ENCODE measurements at regions of chr17 and their contacts with region 1.

Region 1: DNA sequence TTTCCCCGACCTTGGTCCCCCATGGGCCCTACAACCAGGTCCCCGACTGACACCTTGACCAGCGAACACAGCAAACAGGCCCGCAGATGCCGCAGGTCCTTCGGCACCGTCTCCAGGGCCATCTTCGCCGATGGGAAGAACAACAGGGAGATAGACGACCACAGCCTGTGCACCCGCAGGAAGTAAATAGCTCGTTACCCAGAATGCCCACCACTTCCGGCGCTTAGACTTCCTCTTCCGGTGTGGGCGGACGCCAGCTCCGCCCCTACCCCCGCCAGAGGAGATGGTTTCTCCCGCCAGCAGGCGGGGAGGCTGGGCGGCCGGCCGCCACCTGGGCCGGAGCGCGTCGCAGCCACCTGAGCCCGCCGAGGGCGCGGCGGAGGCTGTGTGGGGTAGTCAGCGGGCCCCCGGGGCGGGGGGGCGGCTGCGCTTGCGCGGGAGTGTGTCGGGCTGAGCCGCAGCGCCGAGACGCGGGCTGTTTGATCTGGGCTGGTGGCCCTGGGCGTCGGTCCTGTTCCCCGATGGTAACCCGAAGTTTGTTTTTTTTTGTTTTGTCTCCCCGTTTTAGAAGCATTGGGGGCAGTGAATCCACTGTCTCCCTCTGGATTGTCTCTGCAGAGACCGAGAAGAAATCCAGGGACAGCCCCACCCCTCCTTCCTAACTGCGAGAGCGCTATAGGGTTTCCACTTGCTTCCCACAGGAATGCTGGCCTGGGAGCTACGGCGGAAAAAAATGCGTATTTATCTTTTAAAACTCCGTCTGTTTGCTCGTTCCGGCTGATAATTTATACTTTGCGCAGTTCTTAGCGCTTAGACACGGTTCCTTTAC is at the start of gene SUPT4H1:
- DNase-seq: peak; percentile 89
- ATAC-seq: peak; percentile 88
- H3K4me3 Mint-ChIP-seq: peak within 1 kb of the TSS; percentile 100
- H3K27ac Mint-ChIP-seq: peak within 1 kb of the TSS; percentile 99
- H3K4me1 Mint-ChIP-seq: peaks cover 19% of the 10 kb centered on the region
- H3K27me3 Mint-ChIP-seq: no peaks in the 10 kb centered on the region; the same call in 1 of the 2 replicates
- CTCF ChIP-seq: no peak
- total RNA-seq, gene SUPT4H1: 85.5 to 91.1 TPM (median 89.3 TPM) in 3 replicates

Region 2: GRCh38 chr17:58337600-58338453 is 14.4 kb before region 1 on chr17:
- CTCF ChIA-PET with region 1: interaction called, 30 read pairs
- POLR2A ChIA-PET with region 1: interaction called, 61 read pairs
- DNase-seq: peak; percentile 84
- ATAC-seq: peak; percentile 84
- H3K4me3 Mint-ChIP-seq: 0 out of 2 replicates have a peak overlapping the region, but pooled peaks have one; percentile 14
- H3K27ac Mint-ChIP-seq: peak overlapping the region; percentile 88
- H3K4me1 Mint-ChIP-seq: peaks cover 45% of the 10 kb centered on the region
- H3K27me3 Mint-ChIP-seq: no peaks in the 10 kb centered on the region; the same call in 1 of the 2 replicates
- CTCF ChIP-seq: no peak

Region 3: DNA sequence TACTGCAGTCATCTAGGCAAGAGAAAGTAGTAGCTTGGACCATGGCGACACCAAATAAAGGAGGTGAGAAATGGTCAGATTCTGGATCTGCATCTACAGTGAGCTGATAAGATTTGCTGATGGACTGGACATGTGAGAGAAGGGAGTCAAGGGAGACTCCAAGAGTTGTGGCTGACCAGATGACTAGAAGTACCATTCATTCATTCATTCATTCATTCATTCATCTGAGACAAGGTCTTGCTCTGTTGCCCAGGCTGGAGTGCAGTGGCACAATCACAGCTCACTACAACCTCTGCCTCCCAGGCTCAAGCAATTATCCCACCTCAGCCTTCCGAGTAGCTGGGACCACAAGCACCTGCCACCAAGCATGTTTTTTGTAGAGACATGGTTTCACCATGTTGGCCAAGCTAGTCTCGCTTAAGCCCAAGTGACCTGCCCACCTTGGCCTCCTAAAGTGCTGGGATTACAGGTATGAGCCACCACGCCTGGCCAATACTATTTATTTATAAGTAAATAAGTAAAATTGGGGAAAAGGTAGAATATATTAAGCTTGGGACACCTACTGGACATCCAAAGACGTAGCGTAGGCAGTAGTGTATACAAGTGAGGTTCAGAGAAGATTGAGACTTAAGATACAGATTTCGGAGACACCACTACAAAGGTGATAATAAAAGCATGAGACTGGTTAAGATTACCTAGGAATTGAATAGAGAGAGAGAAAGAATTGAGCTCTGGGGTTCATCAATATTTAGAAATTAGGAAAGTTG is 80.8 kb after region 1 on chr17:
- CTCF ChIA-PET with region 1: interaction called, 10 read pairs
- POLR2A ChIA-PET with region 1: no interaction called
- DNase-seq: no peak
- ATAC-seq: no peak
- H3K4me3 Mint-ChIP-seq: no peak overlapping the region
- H3K27ac Mint-ChIP-seq: no peak overlapping the region
- H3K4me1 Mint-ChIP-seq: no peaks in the 10 kb centered on the region
- H3K27me3 Mint-ChIP-seq: no peaks in the 10 kb centered on the region; the same call in 1 of the 2 replicates
- CTCF ChIP-seq: no peak